GM10248 (cell line): ENCODE measurements at regions of chr7 and their contacts with region 1.

Region 1: DNA sequence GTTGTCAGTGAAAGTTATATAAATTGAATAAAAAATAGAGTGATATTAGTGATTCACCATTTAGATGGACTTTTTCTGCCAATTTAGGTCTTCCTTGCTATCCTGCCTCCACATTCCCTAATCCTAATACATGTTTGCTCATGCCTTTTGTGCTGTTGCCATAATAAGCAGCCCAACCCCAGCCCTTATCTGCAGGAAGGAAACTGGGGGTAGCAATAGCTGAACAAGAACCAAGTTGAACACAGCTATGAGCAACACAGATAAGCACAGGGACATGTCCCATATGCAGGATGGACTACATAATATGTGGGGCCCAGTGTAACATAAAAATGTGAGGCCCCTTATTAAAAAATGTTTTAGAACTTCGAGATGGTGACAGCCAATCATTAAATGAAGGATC is 91.2 kb upstream of the AHR start:
- DNase-seq: no peak
- CTCF ChIP-seq: no peak

Region 2: DNA sequence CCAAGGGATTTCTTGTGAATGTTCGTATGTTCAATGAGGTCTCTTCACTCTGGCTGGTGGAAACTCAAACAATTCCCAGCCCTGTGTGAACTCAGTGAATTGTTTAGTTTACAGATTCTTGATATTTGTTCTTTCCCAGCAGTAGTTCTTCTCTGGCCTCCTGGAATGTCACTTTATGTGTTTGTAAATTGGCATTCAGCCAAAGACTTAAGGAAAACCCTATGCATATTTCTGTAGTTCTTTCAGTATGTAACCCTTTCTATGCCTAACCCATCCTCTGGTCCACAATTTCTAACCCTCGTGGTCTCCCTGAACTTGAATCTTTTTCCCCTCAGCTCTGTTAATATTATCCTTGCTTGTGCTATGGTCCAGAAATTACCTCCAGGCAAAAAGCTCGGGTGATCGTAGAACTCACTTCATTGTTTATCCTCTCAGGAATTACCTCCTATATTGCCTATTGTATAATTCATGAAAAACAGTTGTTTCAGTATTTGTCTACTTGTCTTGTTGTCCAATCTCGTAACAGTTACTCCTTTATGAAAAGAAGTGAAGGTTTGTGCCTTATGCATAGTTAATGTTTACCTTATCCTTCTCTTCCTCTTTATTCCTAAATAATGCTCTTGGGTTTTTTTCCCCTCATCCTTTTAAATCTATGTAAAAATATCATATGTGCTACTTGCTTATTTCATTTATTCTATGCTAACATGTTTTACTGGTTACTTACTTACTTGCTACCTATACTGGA is 301.7 kb before region 1 on chr7:
- CTCF ChIA-PET with region 1: no interaction called
- POLR2A ChIA-PET with region 1: no interaction called
- DNase-seq: no peak
- CTCF ChIP-seq: no peak

Region 3: DNA sequence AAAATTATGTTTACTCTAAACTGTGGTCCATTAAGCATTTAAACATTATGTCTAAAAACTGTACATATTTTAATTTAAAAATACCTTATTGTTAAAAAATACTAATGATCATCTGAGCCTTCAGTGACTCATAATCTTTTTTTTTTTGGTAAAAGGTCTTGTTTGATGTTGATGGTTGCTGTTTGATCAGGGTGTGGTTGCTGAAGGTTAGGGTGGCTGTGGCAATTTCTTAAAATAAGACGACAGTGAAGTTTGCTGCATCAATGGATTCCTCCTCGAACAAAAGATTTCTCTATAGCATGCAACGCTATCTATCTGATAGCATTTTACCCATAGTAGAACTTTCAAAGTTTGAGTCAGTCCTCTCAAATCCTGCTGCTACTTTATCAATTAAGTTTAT is 88.8 kb before region 1 on chr7:
- CTCF ChIA-PET with region 1: no interaction called
- POLR2A ChIA-PET with region 1: no interaction called
- DNase-seq: no peak
- CTCF ChIP-seq: no peak

Region 4: GRCh38 chr7:17195576-17195975 is 11.6 kb before region 1 on chr7:
- CTCF ChIA-PET with region 1: interaction called, 31 read pairs
- POLR2A ChIA-PET with region 1: no interaction called
- DNase-seq: no peak
- CTCF ChIP-seq: no peak

Region 5: GRCh38 chr7:17466216-17466615 is 259.0 kb after region 1 on chr7:
- CTCF ChIA-PET with region 1: no interaction called
- POLR2A ChIA-PET with region 1: no interaction called
- DNase-seq: no peak
- CTCF ChIP-seq: no peak

Region 6: GRCh38 chr7:18076461-18076860 is 869.2 kb after region 1 on chr7:
- CTCF ChIA-PET with region 1: no interaction called
- POLR2A ChIA-PET with region 1: no interaction called
- DNase-seq: no peak
- CTCF ChIP-seq: no peak